Lower leg skin (tissue), 4 donors: ENCODE measurements at regions of chr5 and their contacts with region 1.

Region 1: DNA sequence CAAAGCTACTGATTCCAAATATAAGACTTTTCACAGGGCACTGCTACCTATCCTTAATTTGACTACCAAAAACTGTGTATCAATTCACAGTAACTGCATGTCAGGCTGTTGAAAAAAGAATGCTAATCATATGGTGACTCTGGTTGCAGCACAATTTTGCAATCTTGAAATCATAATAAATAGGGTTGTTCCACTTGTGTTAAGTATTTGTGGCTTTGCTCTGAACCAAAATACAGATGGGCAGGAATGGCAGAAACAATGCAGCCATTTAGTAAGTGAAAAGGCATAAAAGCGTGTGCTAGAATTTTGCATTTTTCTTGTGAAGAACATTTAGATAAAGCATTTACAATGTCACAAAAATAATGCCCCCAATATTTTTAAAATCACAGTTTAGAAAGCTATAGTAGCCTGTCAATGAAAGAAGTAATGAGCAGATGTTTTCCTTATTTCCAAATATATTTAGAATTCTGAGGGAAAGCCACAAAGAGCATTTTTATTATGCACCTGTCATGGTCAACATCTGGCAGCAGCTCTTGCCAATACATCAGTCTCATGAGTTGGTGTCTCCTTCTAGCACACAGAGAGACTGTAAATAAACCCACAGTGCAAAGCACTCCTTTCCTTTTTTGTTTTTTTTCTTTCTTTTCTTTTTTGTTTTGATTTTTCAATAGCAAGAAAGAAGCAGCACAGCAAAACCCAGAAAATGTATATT is 54.8 kb upstream of the PAM start:
- DNase-seq: no peak
- H3K4me3 ChIP-seq: no peak overlapping the region
- CTCF ChIP-seq: no peak
- POLR2A ChIP-seq: no peak

Region 2: GRCh38 chr5:102654559-102655349 is 45.5 kb before region 1 on chr5:
- intact Hi-C with region 1: loop called (anchors 1 kb)
- DNase-seq: no peak
- H3K4me3 ChIP-seq: no peak overlapping the region
- CTCF ChIP-seq: no peak
- POLR2A ChIP-seq: no peak